ENCODE measurements at regions of chr3 and their contacts with region 1.

Region 1: DNA sequence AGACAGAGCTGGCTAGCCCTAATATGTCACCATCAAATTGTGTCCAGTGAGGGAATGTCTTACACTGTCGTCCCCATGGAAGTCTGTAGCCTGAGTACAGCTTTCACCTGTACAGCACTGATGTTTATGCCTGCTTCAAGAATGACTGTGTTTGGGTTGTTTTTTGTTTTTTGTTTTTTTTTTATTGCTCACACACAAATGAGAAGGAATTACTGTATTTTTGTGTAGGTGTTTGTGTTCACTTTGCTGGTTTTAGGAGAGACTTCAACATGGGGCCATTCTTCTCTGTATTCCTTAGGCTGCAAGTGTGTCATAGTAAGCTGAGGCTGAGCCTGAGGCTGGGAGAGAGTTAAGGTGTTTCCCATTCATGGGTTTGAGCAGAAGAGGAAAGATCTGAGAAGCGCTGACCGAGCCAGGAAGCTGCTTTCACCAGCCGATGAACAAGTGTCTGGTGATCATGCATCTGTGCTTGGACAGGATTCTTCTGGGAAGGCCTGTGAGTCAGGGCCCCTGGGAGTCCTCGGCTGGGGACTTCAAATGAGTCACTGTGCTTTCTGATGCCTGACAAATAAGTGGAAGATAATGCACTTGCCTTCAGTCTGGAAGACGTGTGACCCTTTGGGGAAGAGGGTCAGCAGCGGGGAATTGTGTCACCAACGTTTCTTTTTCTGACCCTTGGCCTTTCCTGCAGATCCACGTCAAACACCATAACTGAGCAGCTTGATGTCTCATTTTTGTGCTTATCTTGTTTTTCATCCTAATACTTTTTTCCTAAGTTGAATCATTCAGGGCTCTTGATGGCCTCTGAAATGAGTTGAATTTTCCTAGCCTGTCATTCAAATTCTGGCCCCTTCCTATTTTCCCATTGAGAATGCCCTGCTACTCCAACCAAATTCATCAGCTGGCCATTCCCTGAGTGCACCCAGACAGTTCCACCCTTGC is 36.7 kb upstream of the ZBTB38 start:
- DNase-seq: peak; percentile 69
- ATAC-seq: peak; percentile 24
- H3K4me3 ChIP-seq: no peak overlapping the region
- H3K27ac ChIP-seq: peak overlapping the region; percentile 62
- H3K4me1 ChIP-seq: peaks cover 53% of the 10 kb centered on the region
- H3K27me3 ChIP-seq: no peaks in the 10 kb centered on the region
- CTCF ChIP-seq: no peak
- EP300 ChIP-seq: peak in 1 of 2 experiments; percentile 45; a peak in 1 of 4 replicates
- POLR2A ChIP-seq: no peak
- RAD21 ChIP-seq: no peak

Region 2: DNA sequence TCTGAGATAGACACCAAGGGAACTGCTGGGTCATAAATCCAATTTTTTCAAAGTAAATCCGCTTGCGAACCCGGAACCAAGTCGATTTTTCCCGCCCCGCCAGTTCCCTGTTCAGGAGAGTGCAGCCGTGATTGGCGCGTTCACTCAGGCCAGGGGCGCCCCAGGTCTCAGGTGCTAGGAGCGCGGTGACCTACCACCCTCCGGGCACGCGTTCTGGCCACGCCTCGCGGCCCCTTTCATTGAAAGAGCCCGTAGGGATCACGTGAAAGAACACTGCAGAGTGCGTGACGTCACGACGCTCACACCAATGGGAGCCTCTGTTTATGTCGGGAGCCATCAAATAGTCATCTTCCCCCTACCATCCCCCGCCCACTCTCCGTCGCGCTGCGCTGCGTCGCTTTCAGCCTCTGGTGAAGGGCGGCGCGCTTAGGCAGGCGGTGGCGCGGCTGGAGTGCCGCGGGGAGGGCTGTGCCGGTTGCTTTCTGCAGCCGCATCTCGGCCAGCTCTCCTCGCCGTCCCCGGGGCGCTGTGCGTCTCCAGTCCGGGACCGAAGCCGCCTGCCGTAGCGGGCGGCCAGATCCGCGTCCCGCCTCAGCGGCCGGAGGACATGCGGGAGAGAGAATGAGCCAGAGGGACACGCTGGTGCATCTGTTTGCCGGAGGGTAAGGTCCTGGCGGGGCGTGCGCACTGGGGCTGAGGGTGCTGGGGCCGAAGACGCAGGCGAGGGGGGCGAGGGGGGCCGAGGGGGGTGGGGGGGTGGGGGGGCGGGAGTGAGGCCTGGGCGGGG is 390.0 kb before region 1 on chr3 and contains the start of gene SLC25A36:
- CTCF ChIA-PET with region 1: no interaction called
- POLR2A ChIA-PET with region 1: no interaction called
- RAD21 ChIA-PET with region 1: no interaction called
- SMC1A ChIA-PET with region 1: no interaction called
- in situ Hi-C with region 1: no loop called
- intact Hi-C with region 1: no loop called
- DNase-seq: peak; percentile 98
- ATAC-seq: peak; percentile 95
- H3K4me3 ChIP-seq: peak within 1 kb of the TSS; percentile 94
- H3K27ac ChIP-seq: peak within 1 kb of the TSS; percentile 79
- H3K4me1 ChIP-seq: peaks cover 3% of the 10 kb centered on the region; the same call in 1 of the 2 replicates
- H3K27me3 ChIP-seq: no peaks in the 10 kb centered on the region
- CTCF ChIP-seq: peak in 2 of 3 experiments; percentile 4 to 6; a peak in 2 of 6 replicates
- EP300 ChIP-seq: peak in 1 of 2 experiments; percentile 49; a peak in 2 of 4 replicates
- POLR2A ChIP-seq: peak; percentile 99
- RAD21 ChIP-seq: no peak
- polyA plus RNA-seq, gene SLC25A36: 13.0 to 14.0 TPM

Region 3: DNA sequence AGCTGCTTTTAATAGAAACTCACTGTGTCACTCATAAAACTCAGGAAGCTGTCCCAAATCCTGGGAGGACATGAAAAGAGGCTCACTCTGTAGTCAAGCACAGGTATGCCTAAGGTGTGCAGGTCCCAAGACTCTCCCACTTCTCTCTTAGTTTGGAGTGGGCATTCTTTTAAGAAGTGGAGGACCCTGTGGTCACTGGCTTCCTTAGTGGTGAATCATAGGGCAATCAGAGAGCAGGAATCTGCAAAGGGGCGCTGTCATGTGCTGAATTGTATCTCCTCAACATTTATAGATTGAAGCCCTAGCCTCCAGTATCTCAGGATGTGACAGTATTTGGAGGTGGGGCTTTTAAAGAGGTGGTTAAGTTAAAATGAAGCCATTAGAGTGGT is 10.5 kb before region 1 on chr3:
- CTCF ChIA-PET with region 1: interaction called, 83 read pairs
- POLR2A ChIA-PET with region 1: interaction called, 15 read pairs
- RAD21 ChIA-PET with region 1: interaction called, 14 read pairs
- SMC1A ChIA-PET with region 1: interaction called, 112 read pairs
- in situ Hi-C with region 1: no loop called
- intact Hi-C with region 1: no loop called
- DNase-seq: no peak
- ATAC-seq: no peak
- H3K4me3 ChIP-seq: no peak overlapping the region
- H3K27ac ChIP-seq: no peak overlapping the region
- H3K4me1 ChIP-seq: peaks cover 9% of the 10 kb centered on the region; the same call in 1 of the 2 replicates
- H3K27me3 ChIP-seq: no peaks in the 10 kb centered on the region
- CTCF ChIP-seq: no peak
- EP300 ChIP-seq: no peak
- POLR2A ChIP-seq: no peak
- RAD21 ChIP-seq: no peak

Region 4: GRCh38 chr3:141346418-141346817 is 14.8 kb after region 1 on chr3:
- CTCF ChIA-PET with region 1: interaction called, 4 read pairs
- POLR2A ChIA-PET with region 1: interaction called, 20 read pairs
- RAD21 ChIA-PET with region 1: interaction called, 16 read pairs
- SMC1A ChIA-PET with region 1: interaction called, 24 read pairs
- in situ Hi-C with region 1: no loop called
- intact Hi-C with region 1: no loop called
- DNase-seq: no peak
- ATAC-seq: peak; percentile 50
- H3K4me3 ChIP-seq: no peak overlapping the region
- H3K27ac ChIP-seq: no peak overlapping the region
- H3K4me1 ChIP-seq: peaks cover 12% of the 10 kb centered on the region; the same call in 1 of the 2 replicates
- H3K27me3 ChIP-seq: no peaks in the 10 kb centered on the region
- CTCF ChIP-seq: no peak
- EP300 ChIP-seq: no peak
- POLR2A ChIP-seq: no peak
- RAD21 ChIP-seq: no peak

Region 5: DNA sequence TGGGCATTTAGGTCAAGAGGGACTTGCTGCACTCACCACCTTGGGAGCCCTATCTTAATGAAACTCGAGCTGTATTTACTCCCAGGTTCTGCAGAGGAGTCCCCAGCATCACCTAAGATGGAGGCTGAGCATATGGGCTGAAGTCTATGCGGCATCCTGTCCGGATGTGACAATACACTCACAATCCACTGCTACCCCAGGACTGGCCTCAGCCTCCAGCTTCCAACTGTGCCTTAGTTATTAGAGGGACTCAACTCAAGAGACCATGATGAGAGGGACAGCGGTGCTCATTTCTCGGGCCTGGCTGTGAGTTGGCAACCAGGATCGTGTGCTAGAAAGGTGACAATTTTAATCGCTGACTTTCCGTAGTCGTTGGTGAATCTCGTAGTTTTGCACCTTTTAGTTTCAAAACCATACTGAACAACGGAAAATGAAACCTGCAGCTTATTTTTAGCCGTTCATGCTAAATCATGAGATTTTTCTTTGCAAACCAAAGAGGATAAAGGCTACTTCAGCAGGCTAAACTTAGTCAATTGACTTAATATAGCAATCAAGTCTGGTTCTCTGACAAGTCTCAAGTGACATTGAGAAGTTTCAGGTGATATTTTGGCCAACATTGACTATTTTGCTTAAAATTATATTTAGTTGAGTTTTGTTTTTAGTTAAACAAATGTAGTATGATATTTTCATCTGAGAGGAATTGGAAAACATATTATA is 47.8 kb after region 1 on chr3:
- CTCF ChIA-PET with region 1: interaction called, 3 read pairs
- POLR2A ChIA-PET with region 1: interaction called, 6 read pairs
- RAD21 ChIA-PET with region 1: interaction called, 12 read pairs
- SMC1A ChIA-PET with region 1: interaction called, 55 read pairs
- in situ Hi-C with region 1: no loop called
- intact Hi-C with region 1: loop called (anchors 5 kb)
- DNase-seq: peak; percentile 95
- ATAC-seq: peak; percentile 62
- H3K4me3 ChIP-seq: peak overlapping the region; percentile 41; the same call in 1 of the 2 replicates
- H3K27ac ChIP-seq: peak overlapping the region; percentile 94
- H3K4me1 ChIP-seq: peaks cover 81% of the 10 kb centered on the region
- H3K27me3 ChIP-seq: no peaks in the 10 kb centered on the region
- CTCF ChIP-seq: no peak
- EP300 ChIP-seq: peak; percentile 93 to 98
- POLR2A ChIP-seq: peak; percentile 68
- RAD21 ChIP-seq: peak; percentile 21; the same call in 1 of the 2 replicates

Region 6: GRCh38 chr3:141386611-141387111 is 55.0 kb after region 1 on chr3:
- CTCF ChIA-PET with region 1: interaction called, 18 read pairs
- POLR2A ChIA-PET with region 1: interaction called, 8 read pairs
- RAD21 ChIA-PET with region 1: interaction called, 12 read pairs
- SMC1A ChIA-PET with region 1: interaction called, 55 read pairs
- in situ Hi-C with region 1: no loop called
- intact Hi-C with region 1: no loop called
- DNase-seq: no peak
- ATAC-seq: peak; percentile 58
- H3K4me3 ChIP-seq: peak overlapping the region; percentile 67
- H3K27ac ChIP-seq: peak overlapping the region; percentile 94
- H3K4me1 ChIP-seq: peaks cover 30% of the 10 kb centered on the region
- H3K27me3 ChIP-seq: no peaks in the 10 kb centered on the region
- CTCF ChIP-seq: no peak
- EP300 ChIP-seq: no peak
- POLR2A ChIP-seq: peak; percentile 93
- RAD21 ChIP-seq: no peak